ENCODE measurements at regions of chr14 and their contacts with region 1.

Region 1: GRCh38 chr14:66724991-66725390 is 217.0 kb downstream of the GPHN start:
- DNase-seq: no peak
- H3K4me3 ChIP-seq: no peak overlapping the region
- CTCF ChIP-seq: no peak

Region 2: DNA sequence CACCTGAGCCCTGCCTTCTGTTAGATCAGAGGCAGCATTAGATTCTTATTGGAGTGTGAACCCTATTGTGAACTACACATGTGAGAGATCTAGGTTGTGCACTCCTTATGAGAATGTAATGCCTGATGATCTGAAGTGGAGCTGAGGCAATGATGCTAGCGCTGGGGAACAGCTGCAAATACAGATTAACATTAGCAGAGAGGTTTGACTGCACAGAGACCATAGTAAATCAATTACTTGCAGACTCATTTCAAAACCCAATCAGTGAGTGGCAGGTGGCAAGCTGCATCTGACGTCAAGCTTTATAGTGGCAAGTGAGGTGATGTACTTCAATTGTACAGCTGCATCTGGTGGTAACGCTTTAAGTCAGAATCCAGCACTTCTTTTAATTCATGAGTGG is 75.5 kb before region 1 on chr14:
- in situ Hi-C with region 1: loop called (anchors 5 kb)
- DNase-seq: no peak
- H3K4me3 ChIP-seq: no peak overlapping the region
- CTCF ChIP-seq: no peak